Right ventricle myocardium inferior (tissue), 1 donor: ENCODE measurements at regions of chr10 and their contacts with region 1.

Region 1: GRCh38 chr10:50224330-50224952 is 26.9 kb downstream of the ASAH2 start:
- DNase-seq: no peak
- ATAC-seq: no peak

Region 2: DNA sequence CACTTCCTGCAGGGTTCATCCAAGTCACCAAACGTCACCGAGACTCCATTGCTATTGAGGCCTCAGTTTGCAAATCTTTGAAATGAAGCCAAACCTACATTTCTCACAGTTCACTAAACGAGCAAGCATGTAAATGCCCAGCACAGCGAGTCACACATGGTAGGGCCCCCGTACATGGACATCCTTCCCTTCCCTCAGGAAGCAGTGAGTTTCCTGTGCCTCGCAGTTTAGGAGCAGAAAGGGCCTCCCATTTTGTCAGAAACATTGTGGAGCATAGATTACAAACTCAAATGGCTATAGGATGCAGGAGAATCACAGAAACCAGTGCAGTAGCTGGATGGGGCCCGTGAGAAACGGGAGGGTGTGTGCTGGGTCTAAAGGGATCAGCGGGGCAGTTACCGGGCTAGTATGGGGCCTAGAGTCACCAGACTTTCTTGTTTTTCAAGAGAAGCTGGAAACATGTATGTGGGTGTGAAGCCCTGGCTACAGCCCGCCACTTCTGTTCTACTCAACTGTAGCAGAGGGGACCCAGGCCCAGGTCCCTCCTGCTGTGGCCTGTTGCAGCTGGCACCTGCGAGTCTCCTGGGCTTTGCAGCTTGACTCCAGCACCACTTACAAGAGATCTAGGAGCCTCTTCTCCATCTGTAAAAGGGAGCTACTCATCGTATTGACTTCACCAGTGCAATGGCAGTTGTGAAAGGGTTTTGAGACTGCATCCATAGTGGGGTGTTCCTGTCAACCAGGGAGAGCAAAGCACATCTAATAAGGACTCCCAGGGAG is 628.5 kb before region 1 on chr10:
- intact Hi-C with region 1: loop called (anchors 2 kb)
- DNase-seq: no peak
- ATAC-seq: no peak

Region 3: DNA sequence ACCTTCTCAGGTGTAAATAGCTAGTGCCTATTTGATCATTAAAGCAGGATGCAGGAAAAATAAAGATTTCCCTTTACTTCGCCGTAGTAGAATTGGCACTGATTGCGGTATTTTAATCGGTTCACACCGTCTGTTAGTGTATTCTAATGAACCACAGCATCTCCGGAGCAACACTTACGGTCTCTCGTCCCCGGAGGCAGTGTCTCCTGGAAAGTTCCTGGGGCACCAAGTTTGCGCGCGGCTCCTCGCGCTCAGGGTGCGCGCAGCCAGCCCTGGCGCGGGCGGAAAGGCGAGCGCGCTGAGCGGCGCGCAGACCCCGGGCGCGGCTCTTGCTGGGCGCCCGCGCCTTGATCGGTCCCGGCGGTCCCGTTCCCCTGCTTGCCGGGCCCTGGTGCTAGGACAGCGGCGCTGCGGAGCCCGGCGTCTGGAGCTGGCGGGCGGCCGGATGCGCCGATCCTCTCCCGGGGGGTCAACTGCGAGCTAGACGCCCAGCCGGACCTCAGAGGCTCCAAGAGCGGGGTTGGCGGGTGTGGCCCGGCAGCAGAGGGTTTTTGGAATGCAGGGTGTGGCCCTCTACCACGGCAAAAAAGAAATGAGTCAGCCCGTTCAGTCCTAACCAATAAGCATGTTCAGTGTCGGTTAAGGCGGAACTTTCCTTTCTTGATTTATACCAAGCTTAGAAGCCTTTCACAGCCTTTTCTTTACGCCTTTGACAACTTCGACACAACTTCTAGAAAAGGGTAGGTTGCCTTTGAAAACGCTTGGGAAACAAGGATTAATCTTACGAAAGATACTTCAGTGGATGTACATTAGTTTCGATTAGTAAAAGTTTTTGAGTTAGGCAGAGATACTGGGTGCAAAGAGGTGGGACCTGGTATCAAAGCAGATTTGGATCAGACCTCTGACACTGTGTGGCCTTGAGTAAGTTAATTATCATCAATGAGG is 193.7 kb after region 1 on chr10:
- intact Hi-C with region 1: no loop called
- DNase-seq: peak; percentile 88
- ATAC-seq: peak; percentile 92